Calu3 (cell line): ENCODE measurements at regions of chr5 and their contacts with region 1.

Region 1: GRCh38 chr5:52948418-52949076 is 40.6 kb upstream of the ITGA2 start:
- DNase-seq: peak; percentile 70
- H3K4me3 Mint-ChIP-seq: no peak overlapping the region
- H3K27ac Mint-ChIP-seq: peak overlapping the region; percentile 74
- H3K4me1 Mint-ChIP-seq: peaks cover 25% of the 10 kb centered on the region
- H3K27me3 Mint-ChIP-seq: no peaks in the 10 kb centered on the region
- CTCF ChIP-seq: peak; percentile 69

Region 2: DNA sequence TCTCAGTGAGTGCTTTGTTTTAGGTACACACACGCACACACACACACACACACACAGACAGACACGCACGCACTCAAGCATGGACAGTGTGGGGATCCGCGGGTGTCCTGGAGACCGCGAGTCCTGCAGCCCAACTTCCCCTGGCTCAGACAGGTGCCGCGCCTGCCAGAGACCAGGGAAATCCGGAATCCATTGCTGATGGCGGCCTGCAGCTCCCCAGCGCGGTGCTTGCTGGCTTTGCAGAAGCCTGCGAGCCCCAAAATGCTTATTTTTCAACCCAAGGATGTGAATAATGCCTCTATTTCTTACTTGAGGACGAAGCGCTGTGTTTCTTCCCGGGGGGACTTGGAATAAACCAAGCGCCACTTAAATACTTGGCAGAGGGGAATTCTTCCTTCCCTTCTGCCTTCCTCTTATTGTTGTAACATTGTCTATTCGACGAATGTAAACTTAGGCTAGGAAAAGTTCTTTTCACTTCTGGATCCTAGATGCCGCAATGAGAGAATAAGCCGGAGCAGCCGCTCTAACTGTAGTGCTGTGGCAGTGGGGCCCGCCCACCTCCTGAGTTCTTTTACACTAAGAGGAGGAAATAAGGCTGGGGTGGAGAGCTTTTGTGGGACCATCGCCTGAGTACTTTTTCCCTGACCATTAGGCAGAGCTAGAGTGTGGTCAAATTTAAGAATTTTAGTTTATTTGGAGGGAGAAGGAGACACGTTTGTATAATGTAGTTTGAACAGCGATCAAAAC is 41.4 kb after region 1 on chr5:
- CTCF ChIA-PET with region 1: interaction called, 49 read pairs
- intact Hi-C with region 1: loop called (anchors 1 kb)
- DNase-seq: peak; percentile 46
- H3K4me3 Mint-ChIP-seq: peak overlapping the region; percentile 77
- H3K27ac Mint-ChIP-seq: peak overlapping the region; percentile 69
- H3K4me1 Mint-ChIP-seq: peaks cover 52% of the 10 kb centered on the region
- H3K27me3 Mint-ChIP-seq: no peaks in the 10 kb centered on the region
- CTCF ChIP-seq: no peak

Region 3: GRCh38 chr5:52997424-52997823 is 48.9 kb after region 1 on chr5:
- CTCF ChIA-PET with region 1: interaction called, 14 read pairs
- intact Hi-C with region 1: no loop called
- DNase-seq: peak; percentile 23
- H3K4me3 Mint-ChIP-seq: peak overlapping the region; percentile 21
- H3K27ac Mint-ChIP-seq: peak overlapping the region; percentile 13
- H3K4me1 Mint-ChIP-seq: peaks cover 13% of the 10 kb centered on the region
- H3K27me3 Mint-ChIP-seq: no peaks in the 10 kb centered on the region
- CTCF ChIP-seq: no peak

Region 4: DNA sequence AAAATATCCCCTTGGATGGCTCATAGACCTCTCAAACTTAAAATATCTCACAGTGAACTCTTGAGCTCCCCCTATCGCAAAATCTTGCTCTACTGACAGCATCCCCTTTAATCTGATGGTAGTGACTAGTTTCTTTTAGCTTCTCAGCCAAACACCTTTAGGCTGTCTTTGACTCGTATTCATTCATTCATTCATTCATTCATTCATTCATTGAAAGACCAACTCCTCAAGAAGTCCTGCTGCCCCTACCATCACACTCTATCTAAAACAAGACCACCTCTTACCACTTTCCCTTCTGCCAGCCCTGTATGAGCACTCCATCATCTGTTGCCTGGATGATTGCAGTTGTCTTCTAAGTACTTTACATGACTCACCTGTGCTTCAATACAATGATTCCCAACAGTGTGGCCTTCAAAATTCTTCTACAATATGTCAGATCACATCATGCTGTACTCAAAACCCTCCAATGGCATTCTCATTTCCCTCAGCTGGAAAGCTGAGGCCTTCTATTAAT is 87.4 kb after region 1 on chr5:
- CTCF ChIA-PET with region 1: interaction called, 14 read pairs
- intact Hi-C with region 1: loop called (anchors 1 kb)
- DNase-seq: peak; percentile 38
- H3K4me3 Mint-ChIP-seq: no peak overlapping the region
- H3K27ac Mint-ChIP-seq: peak overlapping the region; percentile 74
- H3K4me1 Mint-ChIP-seq: peaks cover 72% of the 10 kb centered on the region
- H3K27me3 Mint-ChIP-seq: no peaks in the 10 kb centered on the region
- CTCF ChIP-seq: peak; percentile 62

Region 5: DNA sequence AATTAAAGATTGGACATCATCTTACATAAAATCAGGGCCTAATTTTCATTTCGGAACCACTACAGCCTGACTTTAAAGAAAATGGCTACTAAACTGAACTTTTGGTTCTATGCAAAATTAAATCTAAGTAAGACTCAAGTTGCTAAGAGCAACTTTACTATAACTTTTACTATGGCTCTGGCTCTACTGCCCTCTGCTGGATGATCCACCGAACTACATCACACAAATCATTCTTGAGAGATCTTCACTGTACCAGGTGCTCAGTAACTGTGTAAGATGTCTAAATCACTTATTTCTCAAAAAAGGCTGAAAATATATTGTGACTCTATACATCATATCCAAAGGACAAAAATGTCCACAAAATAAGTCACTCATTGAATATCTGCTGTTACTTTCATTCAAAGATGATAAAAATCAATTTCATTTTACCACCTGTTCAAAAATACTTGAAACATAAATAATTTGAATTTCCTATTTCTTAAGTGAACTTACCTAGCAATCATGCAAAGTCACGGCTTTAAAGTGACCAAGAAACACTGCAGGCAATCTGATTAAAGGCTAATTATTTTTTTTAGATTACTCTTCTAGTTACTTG is 147.5 kb after region 1 on chr5:
- CTCF ChIA-PET with region 1: interaction called, 9 read pairs
- intact Hi-C with region 1: loop called (anchors 1 kb)
- DNase-seq: peak; percentile 56
- H3K4me3 Mint-ChIP-seq: no peak overlapping the region
- H3K27ac Mint-ChIP-seq: no peak overlapping the region
- H3K4me1 Mint-ChIP-seq: peaks cover 13% of the 10 kb centered on the region
- H3K27me3 Mint-ChIP-seq: no peaks in the 10 kb centered on the region
- CTCF ChIP-seq: peak; percentile 70

Region 6: DNA sequence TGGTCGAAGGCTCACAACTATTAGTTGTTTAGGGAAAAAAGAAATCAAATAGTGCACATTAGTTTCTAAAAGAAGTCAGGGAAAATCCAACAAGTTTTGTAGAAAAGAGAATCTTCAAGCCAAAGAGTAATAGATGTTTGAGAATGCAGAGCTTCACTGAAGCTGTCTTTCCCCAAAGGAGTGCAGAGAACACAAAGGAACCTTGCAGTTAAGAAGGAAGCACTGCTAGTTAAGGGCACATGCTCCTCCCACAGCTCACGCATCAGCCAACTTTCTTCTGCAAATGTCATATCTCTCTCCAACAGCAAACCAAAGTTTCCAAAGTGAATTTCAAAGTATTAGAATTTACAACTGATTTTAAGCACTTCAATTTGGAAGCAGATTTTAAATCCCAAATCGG is 415.5 kb after region 1 on chr5:
- CTCF ChIA-PET with region 1: no interaction called
- intact Hi-C with region 1: no loop called
- DNase-seq: no peak
- H3K4me3 Mint-ChIP-seq: no peak overlapping the region
- H3K27ac Mint-ChIP-seq: peak overlapping the region; percentile 99
- H3K4me1 Mint-ChIP-seq: peaks cover 71% of the 10 kb centered on the region
- H3K27me3 Mint-ChIP-seq: no peaks in the 10 kb centered on the region
- CTCF ChIP-seq: no peak

Region 7: GRCh38 chr5:54234304-54234933 is 1285.9 kb after region 1 on chr5:
- CTCF ChIA-PET with region 1: no interaction called
- intact Hi-C with region 1: loop called (anchors 10 kb)
- DNase-seq: no peak
- H3K4me3 Mint-ChIP-seq: no peak overlapping the region
- H3K27ac Mint-ChIP-seq: no peak overlapping the region
- H3K4me1 Mint-ChIP-seq: no peaks in the 10 kb centered on the region
- H3K27me3 Mint-ChIP-seq: no peaks in the 10 kb centered on the region
- CTCF ChIP-seq: no peak